Breast epithelium (tissue), 4 donors: ENCODE measurements at regions of chr5 and their contacts with region 1.

Region 1: GRCh38 chr5:173808134-173808808 is 79.9 kb upstream of the CPEB4 start:
- DNase-seq: no peak
- H3K4me3 ChIP-seq: no peak overlapping the region
- H3K27ac ChIP-seq: no peak overlapping the region
- H3K4me1 ChIP-seq: no peaks in the 10 kb centered on the region
- H3K27me3 ChIP-seq: no peaks in the 10 kb centered on the region
- CTCF ChIP-seq: no peak
- POLR2A ChIP-seq: no peak

Region 2: GRCh38 chr5:173378727-173379126 is 429.5 kb before region 1 on chr5:
- intact Hi-C with region 1: no loop called
- DNase-seq: no peak
- H3K4me3 ChIP-seq: no peak overlapping the region
- H3K27ac ChIP-seq: no peak overlapping the region
- H3K4me1 ChIP-seq: no peaks in the 10 kb centered on the region
- H3K27me3 ChIP-seq: no peaks in the 10 kb centered on the region
- CTCF ChIP-seq: no peak
- POLR2A ChIP-seq: no peak

Region 3: GRCh38 chr5:173764321-173765029 is 43.8 kb before region 1 on chr5:
- intact Hi-C with region 1: no loop called
- DNase-seq: peak; percentile 77 to 86
- H3K4me3 ChIP-seq: no peak overlapping the region
- H3K27ac ChIP-seq: peak overlapping the region; percentile 68 to 92
- H3K4me1 ChIP-seq: no peaks in the 10 kb centered on the region
- H3K27me3 ChIP-seq: no peaks in the 10 kb centered on the region
- CTCF ChIP-seq: no peak
- POLR2A ChIP-seq: no peak

Region 4: DNA sequence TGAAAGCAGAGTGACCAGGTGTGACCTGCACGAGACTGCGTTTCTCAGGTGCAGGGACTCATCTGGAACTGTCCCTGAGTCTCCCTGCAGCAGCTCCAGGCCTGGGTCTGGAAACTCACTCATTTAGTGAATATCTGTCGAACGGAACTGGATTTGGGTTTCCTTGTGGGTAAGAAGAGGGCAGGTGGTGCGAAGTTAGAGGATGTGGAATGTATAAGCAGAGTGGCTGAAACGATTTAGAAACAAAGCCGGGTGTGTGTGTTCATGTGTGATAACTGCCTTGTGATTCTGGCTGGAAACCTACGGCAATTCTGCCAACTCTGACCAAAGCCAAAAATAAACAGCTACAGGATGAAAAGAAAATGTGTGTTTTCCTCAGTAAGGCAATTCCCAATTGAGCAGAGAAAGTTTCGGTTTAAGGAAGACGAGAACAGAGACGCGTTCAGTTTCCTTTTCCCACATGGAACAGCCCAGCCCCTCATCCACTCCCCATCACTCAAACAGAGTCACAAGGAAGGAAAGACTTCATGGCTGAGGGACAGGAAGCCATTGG is 367.5 kb after region 1 on chr5:
- intact Hi-C with region 1: loop called (anchors 5 kb)
- DNase-seq: no peak
- H3K4me3 ChIP-seq: no peak overlapping the region
- H3K27ac ChIP-seq: no peak overlapping the region
- H3K4me1 ChIP-seq: no peaks in the 10 kb centered on the region
- H3K27me3 ChIP-seq: no peaks in the 10 kb centered on the region
- CTCF ChIP-seq: no peak
- POLR2A ChIP-seq: no peak